ENCODE measurements at regions of chr18 and their contacts with region 1.

Region 1: GRCh38 chr18:49510393-49511115 is 23.5 kb upstream of the C18orf32 start:
- DNase-seq: peak; percentile 61
- H3K4me3 Mint-ChIP-seq: no peak overlapping the region
- H3K27ac Mint-ChIP-seq: no peak overlapping the region
- H3K4me1 Mint-ChIP-seq: no peaks in the 10 kb centered on the region
- H3K27me3 Mint-ChIP-seq: peaks cover 13% of the 10 kb centered on the region

Region 2: GRCh38 chr18:49393011-49393410 is 117.5 kb before region 1 on chr18:
- CTCF ChIA-PET with region 1: no interaction called
- POLR2A ChIA-PET with region 1: no interaction called
- intact Hi-C with region 1: no loop called
- DNase-seq: no peak
- H3K4me3 Mint-ChIP-seq: no peak overlapping the region
- H3K27ac Mint-ChIP-seq: no peak overlapping the region
- H3K4me1 Mint-ChIP-seq: peaks cover 4% of the 10 kb centered on the region
- H3K27me3 Mint-ChIP-seq: no peaks in the 10 kb centered on the region

Region 3: GRCh38 chr18:49494660-49495059 is 15.9 kb before region 1 on chr18:
- CTCF ChIA-PET with region 1: interaction called, 10 read pairs
- POLR2A ChIA-PET with region 1: no interaction called
- intact Hi-C with region 1: no loop called
- DNase-seq: no peak
- H3K4me3 Mint-ChIP-seq: no peak overlapping the region
- H3K27ac Mint-ChIP-seq: no peak overlapping the region
- H3K4me1 Mint-ChIP-seq: peaks cover 22% of the 10 kb centered on the region
- H3K27me3 Mint-ChIP-seq: peaks cover 3% of the 10 kb centered on the region

Region 4: DNA sequence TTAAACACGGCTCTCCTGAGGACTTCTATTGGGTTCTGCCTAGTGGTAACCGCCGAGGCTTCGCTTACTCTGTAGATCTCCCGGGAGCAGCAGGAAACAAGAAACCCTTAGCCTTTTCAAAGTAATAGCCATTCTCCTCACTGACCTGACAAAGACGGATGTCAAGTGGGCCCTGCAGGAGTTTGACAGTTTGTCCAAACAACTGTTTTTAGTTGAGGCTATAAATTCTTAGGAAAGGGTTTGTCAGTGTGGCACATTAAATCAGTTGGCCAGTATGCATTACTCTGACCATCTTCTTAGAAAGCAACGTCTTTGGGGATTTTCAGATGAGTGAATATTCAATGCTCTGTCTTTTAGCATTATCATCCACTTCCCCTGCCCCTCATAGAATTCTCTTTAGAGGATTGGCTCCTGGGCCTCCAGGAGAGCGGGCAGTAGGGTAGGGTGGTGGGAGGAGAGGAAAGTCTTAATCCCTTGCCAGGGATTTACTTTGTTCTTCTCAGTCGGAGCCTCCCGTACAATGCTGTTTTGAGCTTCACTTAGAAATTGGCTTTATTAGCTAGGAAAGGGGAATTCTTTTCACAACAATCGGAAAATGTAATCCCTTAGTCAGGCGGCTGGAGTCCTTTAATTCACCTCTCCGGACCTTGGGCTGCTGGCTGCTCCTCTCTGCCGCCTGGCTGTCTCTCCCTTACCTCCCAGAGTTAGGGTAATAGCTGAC is 10.2 kb before region 1 on chr18:
- CTCF ChIA-PET with region 1: interaction called, 14 read pairs
- POLR2A ChIA-PET with region 1: no interaction called
- intact Hi-C with region 1: no loop called
- DNase-seq: no peak
- H3K4me3 Mint-ChIP-seq: no peak overlapping the region
- H3K27ac Mint-ChIP-seq: no peak overlapping the region
- H3K4me1 Mint-ChIP-seq: no peaks in the 10 kb centered on the region
- H3K27me3 Mint-ChIP-seq: peaks cover 11% of the 10 kb centered on the region

Region 5: DNA sequence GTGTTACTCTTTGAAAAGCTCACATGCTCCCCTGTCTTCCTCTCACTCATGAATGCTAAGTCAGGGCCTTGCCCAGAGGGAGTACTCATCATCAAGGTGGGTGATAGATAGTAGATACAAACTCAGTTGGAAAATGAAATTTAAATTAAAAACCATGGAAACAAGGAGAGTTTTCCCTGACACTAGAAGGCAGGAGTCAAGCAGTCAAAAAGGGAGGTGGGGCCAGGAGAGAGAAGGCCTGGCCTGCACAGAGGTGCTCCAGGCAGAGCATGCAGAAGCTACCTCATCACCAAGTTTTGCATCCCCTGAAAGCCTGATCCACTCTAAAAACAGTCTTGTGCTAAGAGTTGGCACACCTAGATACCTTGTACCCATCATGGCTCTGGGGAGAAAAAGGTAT is 540.7 kb after region 1 on chr18:
- CTCF ChIA-PET with region 1: no interaction called
- POLR2A ChIA-PET with region 1: no interaction called
- intact Hi-C with region 1: no loop called
- DNase-seq: no peak
- H3K4me3 Mint-ChIP-seq: no peak overlapping the region
- H3K27ac Mint-ChIP-seq: no peak overlapping the region
- H3K4me1 Mint-ChIP-seq: no peaks in the 10 kb centered on the region
- H3K27me3 Mint-ChIP-seq: peaks cover 3% of the 10 kb centered on the region